ENCODE measurements at regions of chr6 and their contacts with region 1.

Region 1: DNA sequence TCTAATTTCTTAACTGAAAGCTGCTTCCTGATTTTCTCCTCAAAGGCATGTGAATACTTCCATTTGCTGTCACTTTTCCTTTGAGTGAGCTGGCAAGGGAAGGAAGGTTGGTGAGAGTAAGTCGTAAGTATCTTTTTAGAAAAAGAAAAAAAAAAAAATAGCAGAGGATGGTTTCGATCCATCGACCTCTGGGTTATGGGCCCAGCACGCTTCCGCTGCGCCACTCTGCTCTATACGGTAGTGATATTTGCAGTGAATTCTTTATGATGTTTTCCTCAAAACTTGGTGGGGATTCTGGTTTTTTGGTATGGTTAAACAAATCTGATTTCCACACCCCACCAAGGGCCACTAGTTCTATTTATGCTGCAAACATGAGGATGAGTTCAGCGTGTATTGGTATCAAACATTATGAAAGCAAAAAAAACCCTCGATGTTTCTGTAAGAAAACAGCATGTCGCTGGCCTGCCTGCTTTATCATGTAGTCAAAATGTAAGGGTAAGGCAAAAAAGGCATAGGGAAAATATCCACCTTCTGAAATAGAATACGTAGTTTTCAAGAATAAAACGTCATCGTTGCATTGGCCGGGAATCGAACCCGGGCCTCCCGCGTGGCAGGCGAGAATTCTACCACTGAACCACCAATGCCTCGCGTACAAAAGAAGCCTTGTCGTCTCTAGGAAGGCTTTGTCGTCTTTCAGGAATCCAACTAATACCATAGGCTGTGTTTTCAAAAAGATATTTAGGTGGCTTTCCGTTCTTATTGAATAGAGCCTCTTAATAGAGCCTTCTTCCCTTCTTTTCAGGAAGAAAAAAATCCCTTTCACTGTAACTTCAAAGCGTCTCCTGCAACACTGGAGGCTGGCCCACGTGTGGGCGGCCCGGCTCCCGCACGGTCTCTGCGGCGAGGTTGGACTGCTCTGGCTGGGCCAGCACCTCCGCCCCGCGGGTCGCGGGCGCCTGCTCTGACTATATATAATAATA is 9.6 kb downstream of the OR2B2 start:
- DNase-seq: peak; percentile 91
- H3K4me3 ChIP-seq: peak overlapping the region; percentile 24 to 63 (median 46)
- H3K27ac ChIP-seq: peak overlapping the region; percentile 80 to 92 (median 88)
- H3K4me1 ChIP-seq: peaks cover 0 to 10% (median 5%) of the 10 kb centered on the region in 4 donors
- H3K27me3 ChIP-seq: peaks cover 8% of the 10 kb centered on the region
- CTCF ChIP-seq: peak in 1 of 5 experiments; percentile 7
- EP300 ChIP-seq: no peak
- POLR2A ChIP-seq: no peak

Region 2: GRCh38 chr6:26493258-26493657 is 1409.4 kb before region 1 on chr6:
- in situ Hi-C with region 1: no loop called
- intact Hi-C with region 1: no loop called
- DNase-seq: no peak
- H3K4me3 ChIP-seq: no peak overlapping the region
- H3K27ac ChIP-seq: no peak overlapping the region
- H3K4me1 ChIP-seq: no peaks in the 10 kb centered on the region
- H3K27me3 ChIP-seq: no peaks in the 10 kb centered on the region
- CTCF ChIP-seq: no peak
- EP300 ChIP-seq: no peak
- POLR2A ChIP-seq: no peak

Region 3: GRCh38 chr6:27188885-27189418 is 713.7 kb before region 1 on chr6:
- in situ Hi-C with region 1: loop called in 1 of 4 experiments (anchors 10 kb)
- intact Hi-C with region 1: no loop called
- DNase-seq: peak; percentile 74
- H3K4me3 ChIP-seq: peak overlapping the region; percentile 41 to 68 (median 59)
- H3K27ac ChIP-seq: peak overlapping the region; percentile 86 to 91 (median 88)
- H3K4me1 ChIP-seq: peaks cover 0 to 7% (median 4%) of the 10 kb centered on the region in 4 donors
- H3K27me3 ChIP-seq: no peaks in the 10 kb centered on the region
- CTCF ChIP-seq: peak; percentile 74 to 85 (median 78)
- EP300 ChIP-seq: no peak
- POLR2A ChIP-seq: no peak

Region 4: GRCh38 chr6:27479319-27480182 is 423.1 kb before region 1 on chr6:
- in situ Hi-C with region 1: loop called in 1 of 4 experiments (anchors 25 kb)
- intact Hi-C with region 1: no loop called
- DNase-seq: peak; percentile 80
- H3K4me3 ChIP-seq: peak overlapping the region; percentile 62 to 90 (median 82)
- H3K27ac ChIP-seq: peak overlapping the region; percentile 95 to 99 (median 98)
- H3K4me1 ChIP-seq: peaks cover 0 to 18% (median 9%) of the 10 kb centered on the region in 4 donors
- H3K27me3 ChIP-seq: no peaks in the 10 kb centered on the region
- CTCF ChIP-seq: no peak
- EP300 ChIP-seq: no peak
- POLR2A ChIP-seq: no peak